ENCODE measurements at regions of chr1 and their contacts with region 1.

Region 1: DNA sequence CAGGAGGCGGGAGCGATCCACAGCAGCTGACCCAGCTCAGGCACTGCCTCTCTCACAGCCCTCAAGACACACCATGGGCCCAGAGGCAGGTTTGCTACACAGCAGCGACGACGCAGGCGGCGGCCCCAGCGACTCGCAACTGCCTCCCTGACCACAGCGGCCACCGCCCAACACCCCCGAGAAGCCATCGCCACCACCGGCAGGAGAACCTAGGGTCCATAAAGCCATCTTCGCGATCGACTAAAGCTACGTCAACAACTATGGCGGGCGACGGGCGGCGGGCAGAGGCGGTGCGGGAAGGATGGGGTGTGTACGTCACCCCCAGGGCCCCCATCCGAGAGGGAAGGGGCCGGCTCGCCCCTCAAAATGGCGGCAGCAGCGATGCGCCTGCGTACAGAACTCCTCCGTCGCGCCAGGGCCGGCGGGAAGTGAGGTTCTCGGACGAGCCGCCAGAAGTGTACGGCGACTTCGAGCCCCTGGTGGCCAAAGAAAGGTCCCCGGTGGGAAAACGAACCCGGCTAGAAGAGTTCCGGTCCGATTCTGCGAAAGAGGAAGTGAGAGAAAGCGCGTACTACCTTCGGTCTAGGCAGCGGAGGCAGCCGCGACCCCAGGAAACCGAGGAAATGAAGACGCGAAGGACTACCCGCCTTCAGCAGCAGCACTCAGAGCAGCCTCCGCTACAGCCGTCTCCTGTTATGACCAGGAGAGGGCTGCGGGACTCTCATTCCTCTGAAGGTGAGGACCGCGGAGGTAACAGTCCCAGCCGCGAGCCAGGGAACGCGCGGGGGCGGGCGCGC is at the start of gene TOR1AIP1:
- DNase-seq: peak; percentile 95 to 99 (median 96)
- ATAC-seq: peak; percentile 73
- H3K4me3 ChIP-seq: peak within 1 kb of the TSS; percentile 83
- H3K4me3 Mint-ChIP-seq: peak within 1 kb of the TSS; percentile 98
- H3K27ac ChIP-seq: peak within 1 kb of the TSS; percentile 99
- H3K27ac Mint-ChIP-seq: peak within 1 kb of the TSS; percentile 100
- H3K4me1 ChIP-seq: peaks cover 26% of the 10 kb centered on the region
- H3K4me1 Mint-ChIP-seq: peaks cover 60% of the 10 kb centered on the region
- H3K27me3 ChIP-seq: no peaks in the 10 kb centered on the region
- H3K27me3 Mint-ChIP-seq: no peaks in the 10 kb centered on the region
- CTCF ChIP-seq: peak; percentile 16
- total RNA-seq, gene TOR1AIP1: 93.8 to 94.4 TPM

Region 2: GRCh38 chr1:179706339-179706941 is 176.0 kb before region 1 on chr1:
- CTCF ChIA-PET with region 1: interaction called, 3 read pairs
- POLR2A ChIA-PET with region 1: interaction called, 6 read pairs
- intact Hi-C with region 1: loop called in 1 of 2 experiments (anchors 5 kb)
- DNase-seq: peak; percentile 29 to 85 (median 54)
- ATAC-seq: no peak
- H3K4me3 ChIP-seq: no peak overlapping the region
- H3K4me3 Mint-ChIP-seq: no peak overlapping the region
- H3K27ac ChIP-seq: no peak overlapping the region
- H3K27ac Mint-ChIP-seq: peak overlapping the region; percentile 70
- H3K4me1 ChIP-seq: peaks cover 15% of the 10 kb centered on the region
- H3K4me1 Mint-ChIP-seq: peaks cover 25% of the 10 kb centered on the region
- H3K27me3 ChIP-seq: no peaks in the 10 kb centered on the region
- H3K27me3 Mint-ChIP-seq: no peaks in the 10 kb centered on the region
- CTCF ChIP-seq: peak; percentile 80

Region 3: DNA sequence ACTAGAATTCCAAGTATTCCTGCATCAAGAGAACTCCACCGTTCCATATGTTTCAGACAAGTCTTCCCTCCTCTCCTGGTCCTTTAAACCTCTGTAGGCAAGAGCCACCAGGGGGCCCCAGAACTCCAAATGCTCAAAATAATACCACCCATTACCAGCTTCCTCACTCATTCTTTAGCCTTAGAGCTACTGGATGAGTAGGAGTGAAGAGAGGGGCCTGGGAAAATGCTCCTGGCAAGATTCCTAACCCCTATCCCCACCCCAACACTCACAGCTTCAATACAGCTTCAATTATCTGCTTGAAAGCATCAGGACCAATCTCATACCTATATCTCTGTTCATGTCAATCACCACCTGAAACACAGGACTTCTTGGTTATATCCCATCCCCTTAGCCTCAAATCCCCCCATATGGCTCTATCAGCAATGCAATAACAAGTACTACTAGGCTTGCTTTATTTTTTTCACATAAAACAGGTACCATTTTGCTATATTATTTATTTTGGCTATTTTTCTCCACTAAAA is 14.6 kb before region 1 on chr1:
- CTCF ChIA-PET with region 1: interaction called, 20 read pairs
- POLR2A ChIA-PET with region 1: interaction called, 6 read pairs
- intact Hi-C with region 1: no loop called
- DNase-seq: peak; percentile 18 to 72 (median 48)
- ATAC-seq: peak; percentile 86
- H3K4me3 ChIP-seq: no peak overlapping the region
- H3K4me3 Mint-ChIP-seq: no peak overlapping the region
- H3K27ac ChIP-seq: no peak overlapping the region
- H3K27ac Mint-ChIP-seq: no peak overlapping the region
- H3K4me1 ChIP-seq: peaks cover 3% of the 10 kb centered on the region
- H3K4me1 Mint-ChIP-seq: peaks cover 37% of the 10 kb centered on the region
- H3K27me3 ChIP-seq: no peaks in the 10 kb centered on the region
- H3K27me3 Mint-ChIP-seq: no peaks in the 10 kb centered on the region
- CTCF ChIP-seq: peak; percentile 74

Region 4: DNA sequence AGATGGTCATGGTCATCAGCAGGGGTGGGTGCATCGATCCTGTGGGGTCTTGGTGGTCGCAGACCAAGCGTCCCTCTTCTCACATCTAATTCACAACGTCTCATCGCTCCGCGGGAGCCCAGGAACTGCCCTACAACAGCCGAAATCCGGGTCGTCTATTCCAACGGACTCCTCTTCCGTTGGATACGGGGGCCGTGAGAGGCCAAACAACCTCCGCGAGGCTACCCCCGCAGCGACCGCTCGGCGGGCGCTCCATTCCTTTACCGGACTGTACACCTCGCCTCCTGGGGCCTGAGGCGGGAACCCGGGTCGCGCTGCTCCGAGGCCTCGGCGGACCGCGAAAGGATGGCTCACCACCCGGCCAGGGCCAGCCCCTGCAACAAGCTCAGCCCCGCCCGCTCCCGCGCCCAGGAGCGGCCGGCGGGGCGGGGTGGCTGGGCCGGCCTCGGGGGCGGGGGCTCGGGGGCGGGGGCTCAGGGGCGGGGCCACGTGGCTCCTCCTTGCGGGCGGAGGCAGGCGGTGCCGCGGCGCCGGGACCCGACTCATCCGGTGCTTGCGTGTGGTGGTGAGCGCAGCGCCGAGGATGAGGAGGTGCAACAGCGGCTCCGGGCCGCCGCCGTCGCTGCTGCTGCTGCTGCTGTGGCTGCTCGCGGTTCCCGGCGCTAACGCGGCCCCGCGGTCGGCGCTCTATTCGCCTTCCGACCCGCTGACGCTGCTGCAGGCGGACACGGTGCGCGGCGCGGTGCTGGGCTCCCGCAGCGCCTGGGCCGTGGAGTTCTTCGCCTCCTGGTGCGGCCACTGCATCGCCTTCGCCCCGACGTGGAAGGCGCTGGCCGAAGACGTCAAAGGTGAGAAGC is 272.1 kb after region 1 on chr1 and contains the start of gene QSOX1:
- CTCF ChIA-PET with region 1: no interaction called
- POLR2A ChIA-PET with region 1: interaction called, 23 read pairs
- intact Hi-C with region 1: loop called (anchors 2 to 10 kb)
- DNase-seq: peak; percentile 80 to 97 (median 86)
- ATAC-seq: peak; percentile 97
- H3K4me3 ChIP-seq: peak within 1 kb of the TSS; percentile 90
- H3K4me3 Mint-ChIP-seq: peak within 1 kb of the TSS; percentile 95
- H3K27ac ChIP-seq: peak within 1 kb of the TSS; percentile 19 to 42
- H3K27ac Mint-ChIP-seq: peak within 1 kb of the TSS; percentile 82
- H3K4me1 ChIP-seq: peaks cover 27% of the 10 kb centered on the region
- H3K4me1 Mint-ChIP-seq: peaks cover 33% of the 10 kb centered on the region
- H3K27me3 ChIP-seq: no peaks in the 10 kb centered on the region
- H3K27me3 Mint-ChIP-seq: no peaks in the 10 kb centered on the region
- CTCF ChIP-seq: no peak
- total RNA-seq, gene QSOX1: 13.7 to 14.3 TPM

Region 5: GRCh38 chr1:181021811-181022434 is 1139.5 kb after region 1 on chr1:
- CTCF ChIA-PET with region 1: no interaction called
- POLR2A ChIA-PET with region 1: no interaction called
- intact Hi-C with region 1: loop called in 1 of 2 experiments (anchors 10 kb)
- DNase-seq: peak in 13 of 14 experiments; percentile 22 to 80 (median 44)
- ATAC-seq: peak; percentile 40
- H3K4me3 ChIP-seq: peak overlapping the region; percentile 76
- H3K4me3 Mint-ChIP-seq: peak overlapping the region; percentile 99
- H3K27ac ChIP-seq: peak overlapping the region; percentile 53 to 83
- H3K27ac Mint-ChIP-seq: peak overlapping the region; percentile 98
- H3K4me1 ChIP-seq: peaks cover 26% of the 10 kb centered on the region
- H3K4me1 Mint-ChIP-seq: peaks cover 47% of the 10 kb centered on the region
- H3K27me3 ChIP-seq: no peaks in the 10 kb centered on the region
- H3K27me3 Mint-ChIP-seq: peaks cover 12% of the 10 kb centered on the region
- CTCF ChIP-seq: no peak